ENCODE measurements at regions of chr2 and their contacts with region 1.

Region 1: DNA sequence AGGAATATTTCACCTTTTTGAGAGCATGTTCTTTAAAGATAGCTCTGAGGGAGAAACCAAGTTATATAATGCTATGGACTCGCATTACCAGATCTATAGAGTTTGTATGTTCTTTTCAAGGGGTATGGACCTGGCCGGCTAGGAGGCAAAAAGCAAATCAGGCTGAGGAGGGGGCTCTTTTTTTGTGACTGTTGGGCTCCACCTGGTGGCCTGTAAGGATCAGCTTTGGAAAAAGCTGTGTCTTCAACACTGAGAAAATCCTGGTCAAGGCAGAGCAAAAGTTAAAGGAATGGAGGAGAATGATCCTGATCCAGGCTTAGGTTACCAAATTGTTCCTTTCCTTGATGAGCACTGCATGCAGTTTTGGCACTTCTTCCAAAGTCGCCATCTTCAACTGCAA is 180.5 kb downstream of the DIS3L2 start:
- DNase-seq: no peak
- CTCF ChIP-seq: peak; percentile 70

Region 2: DNA sequence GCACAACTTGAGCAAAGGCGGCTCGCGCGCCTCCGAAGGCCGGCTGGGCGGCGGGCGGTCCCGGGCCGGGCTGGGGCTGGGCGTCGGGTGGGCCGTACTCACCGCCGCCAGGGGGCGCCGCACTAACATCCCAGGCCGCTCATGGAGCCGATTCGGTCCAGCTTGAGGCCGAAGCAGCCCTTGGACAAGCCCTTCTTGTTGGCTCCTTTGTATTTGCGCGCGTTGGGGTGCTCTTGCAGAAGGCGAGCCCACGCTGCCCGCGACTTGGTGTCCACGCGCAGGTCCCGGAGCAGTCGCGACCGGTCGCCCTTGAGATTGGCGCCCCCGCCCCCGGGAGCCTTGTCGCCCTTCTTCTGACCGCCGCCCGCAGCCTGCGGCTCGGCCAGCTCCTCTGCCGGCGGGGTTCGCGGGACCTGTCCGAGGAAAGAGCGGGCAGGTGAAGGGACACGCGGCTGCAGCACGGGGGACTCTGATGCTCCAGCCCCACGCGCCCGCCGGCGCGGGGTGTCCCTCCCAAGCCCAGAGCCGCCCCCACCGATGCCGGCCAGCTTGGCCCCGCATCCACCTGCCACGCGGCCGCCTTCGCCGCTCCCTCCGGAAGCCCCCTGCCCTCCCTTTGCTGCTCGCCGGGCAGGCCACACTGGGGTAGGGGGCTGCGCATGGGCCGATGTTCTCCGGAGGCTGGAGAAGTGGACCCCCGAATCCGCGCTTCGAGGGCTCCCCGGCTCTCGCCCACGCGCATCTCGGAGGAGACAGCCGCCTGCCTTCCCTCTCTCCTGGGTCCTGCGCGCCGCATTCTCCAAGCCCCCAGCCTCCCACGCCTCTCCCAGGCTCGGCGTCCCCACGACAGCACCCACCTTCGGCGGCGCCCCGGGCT is 216.5 kb before region 1 on chr2:
- CTCF ChIA-PET with region 1: interaction called, 52 read pairs
- POLR2A ChIA-PET with region 1: no interaction called
- DNase-seq: peak; percentile 88
- CTCF ChIP-seq: peak; percentile 70

Region 3: DNA sequence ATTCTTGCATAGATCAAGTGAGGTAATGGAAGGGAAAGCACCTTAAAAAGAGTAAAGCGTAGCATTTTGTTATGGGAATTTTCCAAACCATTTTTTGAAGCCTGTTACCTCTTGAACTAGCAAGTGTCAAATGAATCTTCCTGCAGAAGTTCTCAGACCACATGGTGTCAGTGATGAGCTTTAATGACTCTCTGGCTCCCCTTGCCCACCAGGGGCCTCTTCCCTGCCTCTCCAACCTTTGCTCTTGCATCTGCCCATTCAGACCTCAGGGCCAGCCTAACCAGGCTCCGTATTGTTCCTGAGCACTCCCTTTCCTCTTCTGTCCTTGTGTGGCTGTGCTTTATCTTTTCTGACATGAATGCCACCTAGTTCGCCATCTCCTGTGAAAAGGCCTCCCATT is 24.6 kb before region 1 on chr2:
- CTCF ChIA-PET with region 1: interaction called, 18 read pairs
- POLR2A ChIA-PET with region 1: no interaction called
- DNase-seq: no peak
- CTCF ChIP-seq: no peak

Region 4: DNA sequence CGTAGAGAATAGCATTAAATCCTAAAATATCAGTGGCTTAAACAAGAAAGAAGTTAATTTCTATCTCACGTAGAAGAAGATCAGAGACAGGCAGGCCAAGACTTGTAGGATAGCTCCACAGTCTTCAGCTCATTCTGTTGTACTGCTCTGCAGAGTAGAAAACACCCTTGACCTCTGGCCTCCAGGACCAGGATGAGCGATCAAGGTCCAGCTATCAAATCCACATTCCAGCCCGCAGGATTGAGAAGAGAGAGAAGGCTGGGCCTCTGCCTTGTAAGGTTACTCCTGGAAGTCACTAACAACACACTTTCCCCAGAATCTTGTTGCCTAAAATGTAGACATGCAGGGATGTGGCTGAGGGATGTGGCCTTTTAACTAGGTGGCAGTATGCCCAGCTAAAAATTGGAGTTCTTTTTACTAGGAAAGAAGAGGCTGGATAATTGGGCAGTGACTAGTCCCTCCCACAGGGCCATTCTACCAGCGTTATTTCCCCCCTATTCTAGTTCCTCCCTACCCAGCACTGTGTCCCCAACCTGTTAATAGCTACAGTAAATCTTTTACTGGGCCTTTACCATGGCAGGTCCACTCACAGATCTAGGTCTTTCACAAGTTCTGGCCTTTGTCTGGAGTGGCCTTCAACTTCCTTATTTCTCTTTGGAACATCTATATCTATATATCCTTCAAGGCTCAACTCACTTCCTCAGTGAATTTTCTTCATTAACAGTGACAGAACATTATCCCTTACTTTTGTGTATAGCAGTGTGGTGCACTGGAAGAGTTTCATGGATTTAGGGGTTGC is 15.5 kb before region 1 on chr2:
- CTCF ChIA-PET with region 1: interaction called, 18 read pairs
- POLR2A ChIA-PET with region 1: no interaction called
- DNase-seq: no peak
- CTCF ChIP-seq: no peak

Region 5: GRCh38 chr2:232174662-232175061 is 32.6 kb after region 1 on chr2:
- CTCF ChIA-PET with region 1: no interaction called
- POLR2A ChIA-PET with region 1: no interaction called
- DNase-seq: no peak
- CTCF ChIP-seq: no peak

Region 6: DNA sequence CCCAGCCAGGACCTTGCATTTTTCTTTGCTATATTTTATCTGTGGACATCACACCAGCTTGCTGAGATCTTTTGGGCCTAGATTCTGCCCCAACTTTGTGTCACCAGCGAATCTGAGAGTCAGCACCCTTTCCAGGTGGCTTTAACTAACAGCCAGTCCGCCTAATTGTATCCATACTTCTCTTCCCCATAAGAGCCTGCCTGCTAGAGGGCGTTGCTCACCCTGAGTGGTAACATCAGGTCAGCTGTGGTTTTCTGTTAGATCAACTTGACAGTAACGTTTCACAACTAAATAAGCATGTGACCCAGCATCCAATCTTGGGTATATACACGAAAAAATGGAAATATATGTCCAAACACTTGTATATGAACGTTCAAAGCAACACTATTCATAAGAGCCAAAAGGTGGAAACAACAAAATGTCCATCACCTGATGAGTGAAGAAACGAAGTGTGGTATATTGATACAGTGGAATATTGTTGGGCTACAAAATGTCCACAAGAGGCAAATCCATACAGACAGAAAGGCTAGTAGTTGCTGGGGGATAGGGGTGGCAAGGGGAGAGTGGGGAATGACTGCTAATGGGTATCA is 516.2 kb after region 1 on chr2:
- CTCF ChIA-PET with region 1: no interaction called
- POLR2A ChIA-PET with region 1: no interaction called
- DNase-seq: no peak
- CTCF ChIP-seq: peak; percentile 8

Measured in GM10248 (cell line).